Naive thymus-derived CD8-positive, alpha-beta T cell (primary cell): ENCODE measurements at regions of chr5 and their contacts with region 1.

Region 1: GRCh38 chr5:141701360-141702119 is 19.5 kb upstream of the ARAP3 start:
- DNase-seq: peak in 1 of 10 donors; percentile 24
- ATAC-seq: peak; percentile 20 to 32
- H3K4me3 Mint-ChIP-seq: peak overlapping the region in 7 of 10 donors; percentile 24 to 91 (median 74)
- H3K27ac Mint-ChIP-seq: peak overlapping the region in 5 of 10 donors; percentile 47 to 87 (median 56)
- H3K4me1 Mint-ChIP-seq: peaks cover 14 to 23% (median 21%) of the 10 kb centered on the region in 4 donors
- H3K27me3 Mint-ChIP-seq: peaks cover 21 to 40% (median 38%) of the 10 kb centered on the region in 5 donors

Region 2: GRCh38 chr5:141681695-141682641 is 19.6 kb before region 1 on chr5 and contains the start of gene ARAP3:
- POLR2A ChIA-PET with region 1: interaction called, 15 read pairs
- DNase-seq: peak in 5 of 10 donors; percentile 22 to 48 (median 41)
- ATAC-seq: peak; percentile 56 to 79
- H3K4me3 Mint-ChIP-seq: peak within 1 kb of the TSS; percentile 32 to 89 (median 83)
- H3K27ac Mint-ChIP-seq: peak within 1 kb of the TSS; percentile 42 to 95 (median 87)
- H3K4me1 Mint-ChIP-seq: peaks cover 18 to 44% (median 29%) of the 10 kb centered on the region in 4 donors
- H3K27me3 Mint-ChIP-seq: no peaks in the 10 kb centered on the region
- polyA plus RNA-seq, gene ARAP3: not detected

Region 3: DNA sequence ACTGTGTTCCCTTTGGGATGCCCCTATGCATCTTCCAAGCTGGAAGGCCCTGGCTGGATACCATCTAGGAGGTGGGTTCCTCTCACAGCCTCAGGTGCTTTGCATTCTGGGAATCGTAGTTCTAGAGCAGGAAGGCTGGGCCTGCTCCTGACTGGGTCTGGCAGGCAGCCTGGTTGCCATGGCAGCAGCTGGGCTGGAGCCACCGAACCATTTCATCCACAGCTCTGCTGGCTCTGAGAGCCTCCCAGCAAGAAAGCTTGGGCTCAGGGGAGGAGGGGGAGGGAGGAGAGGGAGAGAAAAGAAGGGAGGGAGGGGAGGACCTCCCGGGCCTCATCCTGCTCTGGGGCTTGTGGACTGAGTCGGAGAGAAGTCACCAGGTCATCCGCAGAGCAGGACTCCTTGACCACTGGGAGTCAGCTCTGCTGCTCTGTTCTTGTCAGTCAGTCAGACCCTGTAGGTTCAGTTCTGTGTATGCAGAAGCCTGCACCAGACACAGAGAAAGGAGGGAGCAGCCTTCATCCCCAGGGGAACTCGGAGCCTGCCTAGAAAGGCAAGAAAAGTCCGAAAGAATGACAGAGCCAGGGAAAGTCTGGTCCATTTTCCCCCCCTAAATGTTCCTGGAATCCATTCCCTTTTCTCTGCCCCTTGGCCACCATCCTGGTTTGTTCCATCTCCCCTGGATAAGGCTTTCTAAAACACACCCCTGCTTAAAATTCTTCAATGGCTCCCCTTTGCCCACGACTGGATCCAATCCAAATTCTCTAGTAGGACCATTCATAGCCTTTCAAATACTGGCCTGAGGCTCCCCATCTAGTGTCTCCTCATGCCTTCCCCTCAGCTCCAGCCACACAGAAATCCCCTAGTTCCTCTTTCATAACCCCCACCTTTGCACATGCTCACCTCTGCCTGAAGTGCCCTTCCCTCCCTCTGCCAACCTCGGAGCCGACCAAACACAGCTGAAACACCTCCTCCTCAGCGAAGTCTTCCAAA is 45.9 kb after region 1 on chr5:
- POLR2A ChIA-PET with region 1: no interaction called
- DNase-seq: no peak
- ATAC-seq: no peak
- H3K4me3 Mint-ChIP-seq: no peak overlapping the region
- H3K27ac Mint-ChIP-seq: no peak overlapping the region
- H3K4me1 Mint-ChIP-seq: peaks cover 0 to 4% (median 1%) of the 10 kb centered on the region in 4 donors
- H3K27me3 Mint-ChIP-seq: peaks cover 37 to 77% (median 51%) of the 10 kb centered on the region in 5 donors

Region 4: GRCh38 chr5:141878711-141879425 is 177.3 kb after region 1 on chr5:
- POLR2A ChIA-PET with region 1: interaction called, 18 read pairs
- DNase-seq: peak; percentile 74 to 95 (median 88)
- ATAC-seq: peak; percentile 85 to 90
- H3K4me3 Mint-ChIP-seq: peak overlapping the region; percentile 80 to 97 (median 82)
- H3K27ac Mint-ChIP-seq: peak overlapping the region in 8 of 10 donors; percentile 0 to 90 (median 36)
- H3K4me1 Mint-ChIP-seq: peaks cover 21 to 48% (median 31%) of the 10 kb centered on the region in 4 donors
- H3K27me3 Mint-ChIP-seq: peaks cover 42 to 90% (median 69%) of the 10 kb centered on the region in 5 donors

Region 5: DNA sequence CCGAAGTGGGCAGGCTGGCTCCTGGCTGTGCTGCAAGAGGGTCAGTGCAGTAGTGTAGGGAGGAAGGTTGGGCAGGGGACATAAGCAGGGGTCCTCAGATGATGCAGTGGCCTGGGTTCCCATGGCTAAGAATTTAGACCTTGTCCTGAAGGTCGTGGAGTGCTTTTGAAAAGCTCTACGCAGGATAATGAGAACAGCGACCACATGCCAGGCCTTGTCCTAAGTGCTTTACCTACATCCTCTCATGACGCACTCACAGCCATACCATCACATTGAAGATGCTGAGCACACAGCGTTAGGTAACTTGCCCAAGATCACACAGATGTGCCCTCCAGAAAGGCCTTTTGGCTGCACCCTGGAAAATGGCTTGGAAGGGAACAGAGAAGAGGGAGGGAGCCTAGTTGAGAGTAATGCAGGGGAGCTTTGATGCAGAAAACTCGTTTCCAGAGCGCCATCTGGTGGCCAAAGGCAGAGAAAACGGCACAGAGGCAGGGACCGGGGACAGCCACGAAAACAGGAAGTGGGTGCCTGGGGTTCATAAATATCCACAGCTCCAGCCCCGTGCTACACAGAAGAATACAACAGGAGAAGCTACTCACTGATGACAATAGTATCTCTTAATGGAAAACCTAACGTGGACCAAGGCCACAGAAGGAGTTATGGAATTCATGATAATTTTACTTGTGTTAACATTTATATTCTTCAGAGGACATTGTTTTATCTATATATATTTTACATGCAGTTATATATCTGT is 259.1 kb after region 1 on chr5:
- POLR2A ChIA-PET with region 1: interaction called, 28 read pairs
- DNase-seq: peak; percentile 77 to 94 (median 89)
- ATAC-seq: peak; percentile 97 to 98
- H3K4me3 Mint-ChIP-seq: peak overlapping the region; percentile 39 to 72 (median 66)
- H3K27ac Mint-ChIP-seq: peak overlapping the region; percentile 70 to 96 (median 88)
- H3K4me1 Mint-ChIP-seq: peaks cover 25 to 53% (median 43%) of the 10 kb centered on the region in 4 donors
- H3K27me3 Mint-ChIP-seq: no peaks in the 10 kb centered on the region